A549 (cell line): ENCODE measurements at regions of chr1 and their contacts with region 1.

Region 1: DNA sequence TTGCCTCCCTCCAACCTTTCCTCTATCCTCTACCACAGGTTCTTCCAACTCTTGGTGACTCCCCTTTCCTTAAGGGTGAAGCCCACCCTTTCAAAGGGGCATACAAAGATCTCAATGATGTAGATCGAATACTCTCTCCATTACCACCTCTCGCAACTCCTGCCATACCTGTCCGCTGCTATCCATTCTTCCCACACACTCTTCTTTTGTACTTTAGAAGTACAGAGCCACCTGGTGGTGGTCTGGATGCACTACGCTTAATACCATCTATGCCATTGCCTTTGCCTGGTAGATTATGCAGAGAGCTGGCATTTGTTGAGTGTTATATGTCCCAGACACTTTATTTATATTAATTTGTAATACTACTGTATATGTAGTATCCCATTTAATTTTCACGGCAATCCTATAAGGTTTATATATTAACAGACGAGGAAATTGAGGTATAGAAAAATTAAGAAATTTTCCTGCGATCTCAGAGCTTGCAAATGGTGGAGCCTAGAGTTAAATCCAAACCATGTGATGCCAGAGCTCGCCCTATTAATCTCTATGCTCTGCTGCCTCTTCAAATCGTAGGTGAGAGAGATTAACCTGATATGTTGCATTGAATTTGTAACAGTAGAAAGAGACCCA is 22.9 kb downstream of the TSHB start:
- DNase-seq: peak; percentile 48 to 49
- ATAC-seq: peak; percentile 85 to 89; a peak in 5 of 6 replicates
- H3K4me3 ChIP-seq: no peak overlapping the region
- H3K27ac ChIP-seq: no peak overlapping the region
- H3K4me1 ChIP-seq: no peaks in the 10 kb centered on the region
- CTCF ChIP-seq: peak; percentile 56
- EP300 ChIP-seq: no peak
- POLR2A ChIP-seq: no peak
- RAD21 ChIP-seq: peak; percentile 41 to 44; a peak in 4 of 5 replicates

Region 2: DNA sequence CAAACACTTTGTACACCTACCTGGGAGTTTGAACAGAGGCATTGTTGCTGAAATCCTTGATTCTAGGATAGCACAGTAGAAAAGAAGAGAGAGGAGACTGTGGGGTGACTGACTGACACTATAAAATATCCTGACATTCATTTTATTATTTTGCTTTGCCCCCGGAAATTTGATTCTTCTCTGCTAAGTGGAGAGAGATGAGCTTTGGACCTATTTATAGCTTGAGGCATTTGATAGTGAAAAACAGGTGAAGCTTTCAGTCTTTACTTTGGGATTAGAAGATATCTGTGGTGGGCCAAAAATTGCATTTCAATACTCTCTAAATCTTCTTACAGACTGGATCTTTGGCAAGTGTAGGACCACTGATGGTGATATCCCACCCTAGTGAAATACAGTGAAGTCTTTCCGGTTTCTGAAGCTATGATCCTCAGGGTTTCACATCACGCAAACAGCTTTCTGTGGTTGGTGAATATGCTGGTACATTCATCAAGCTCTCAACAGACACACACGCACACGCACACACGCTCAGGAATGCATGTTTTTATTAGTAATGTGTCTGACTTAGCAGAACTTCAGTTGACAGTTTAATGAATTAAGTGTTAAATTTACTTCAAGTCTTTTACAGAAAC is 357.0 kb before region 1 on chr1 and contains the start of gene AMPD1:
- CTCF ChIA-PET with region 1: no interaction called
- POLR2A ChIA-PET with region 1: no interaction called
- DNase-seq: no peak
- ATAC-seq: no peak
- H3K4me3 ChIP-seq: no peak within 1 kb of the TSS
- H3K27ac ChIP-seq: no peak within 1 kb of the TSS
- H3K4me1 ChIP-seq: no peaks in the 10 kb centered on the region
- CTCF ChIP-seq: no peak
- EP300 ChIP-seq: no peak
- POLR2A ChIP-seq: no peak
- RAD21 ChIP-seq: no peak
- polyA plus RNA-seq, gene AMPD1: not detected in 2 replicates

Region 3: DNA sequence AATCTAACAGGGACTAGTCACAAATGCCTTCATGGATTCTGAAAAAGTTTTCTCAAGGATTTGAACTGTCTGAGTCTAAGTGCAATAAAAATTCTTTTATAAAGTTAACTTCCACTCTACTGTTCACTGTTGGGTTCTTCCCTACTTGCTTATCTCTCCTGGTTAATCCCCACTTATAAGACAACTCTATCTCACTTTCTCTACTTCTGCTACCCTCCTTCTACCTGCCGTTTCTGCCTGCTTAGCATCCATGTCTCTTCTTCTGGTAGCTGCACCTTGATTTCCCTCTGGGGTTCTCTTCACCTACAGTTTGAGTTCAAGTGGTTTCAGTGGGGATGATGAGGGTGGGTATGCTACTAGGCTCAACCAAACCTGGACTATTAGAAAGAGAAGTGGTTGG is 16.9 kb before region 1 on chr1:
- CTCF ChIA-PET with region 1: no interaction called
- POLR2A ChIA-PET with region 1: no interaction called
- DNase-seq: no peak
- ATAC-seq: no peak
- H3K4me3 ChIP-seq: no peak overlapping the region
- H3K27ac ChIP-seq: no peak overlapping the region
- H3K4me1 ChIP-seq: no peaks in the 10 kb centered on the region
- CTCF ChIP-seq: no peak
- EP300 ChIP-seq: no peak
- POLR2A ChIP-seq: no peak
- RAD21 ChIP-seq: no peak

Region 4: DNA sequence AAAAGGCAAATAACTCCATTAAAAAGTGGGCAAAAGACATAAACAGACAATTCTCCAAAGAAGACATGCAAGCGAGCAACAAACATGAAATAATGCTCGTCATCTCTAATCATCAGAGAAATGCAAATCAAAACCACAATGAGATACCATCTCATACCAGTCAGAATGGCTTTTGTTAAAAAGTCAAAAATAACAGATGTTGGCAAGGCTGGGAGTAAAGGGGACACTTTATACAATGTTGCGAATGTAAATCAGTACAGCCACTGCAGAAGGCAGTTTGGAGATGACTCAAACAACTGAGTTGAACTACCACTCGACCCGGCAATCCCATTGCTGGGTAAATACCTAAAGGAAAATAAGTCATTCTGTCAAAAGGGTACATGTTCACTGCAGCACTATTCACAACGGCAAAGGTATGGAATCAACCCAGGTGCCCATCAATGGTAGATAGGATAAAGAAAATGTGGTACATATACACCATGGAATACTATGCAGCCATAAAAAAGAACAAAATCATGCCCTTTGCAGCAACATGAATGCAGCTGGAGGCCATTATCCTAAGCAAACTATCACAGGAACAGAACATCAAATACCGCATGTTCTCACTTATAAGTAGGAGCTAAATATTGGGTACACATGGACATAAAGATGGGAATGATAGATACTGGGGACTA is 10.8 kb after region 1 on chr1:
- CTCF ChIA-PET with region 1: interaction called, 13 read pairs
- POLR2A ChIA-PET with region 1: no interaction called
- DNase-seq: no peak
- ATAC-seq: no peak
- H3K4me3 ChIP-seq: no peak overlapping the region
- H3K27ac ChIP-seq: no peak overlapping the region
- H3K4me1 ChIP-seq: no peaks in the 10 kb centered on the region
- CTCF ChIP-seq: no peak
- EP300 ChIP-seq: no peak
- POLR2A ChIP-seq: no peak
- RAD21 ChIP-seq: no peak